CD8-positive, alpha-beta T cell (primary cell): ENCODE measurements at regions of chr17 and their contacts with region 1.

Region 1: DNA sequence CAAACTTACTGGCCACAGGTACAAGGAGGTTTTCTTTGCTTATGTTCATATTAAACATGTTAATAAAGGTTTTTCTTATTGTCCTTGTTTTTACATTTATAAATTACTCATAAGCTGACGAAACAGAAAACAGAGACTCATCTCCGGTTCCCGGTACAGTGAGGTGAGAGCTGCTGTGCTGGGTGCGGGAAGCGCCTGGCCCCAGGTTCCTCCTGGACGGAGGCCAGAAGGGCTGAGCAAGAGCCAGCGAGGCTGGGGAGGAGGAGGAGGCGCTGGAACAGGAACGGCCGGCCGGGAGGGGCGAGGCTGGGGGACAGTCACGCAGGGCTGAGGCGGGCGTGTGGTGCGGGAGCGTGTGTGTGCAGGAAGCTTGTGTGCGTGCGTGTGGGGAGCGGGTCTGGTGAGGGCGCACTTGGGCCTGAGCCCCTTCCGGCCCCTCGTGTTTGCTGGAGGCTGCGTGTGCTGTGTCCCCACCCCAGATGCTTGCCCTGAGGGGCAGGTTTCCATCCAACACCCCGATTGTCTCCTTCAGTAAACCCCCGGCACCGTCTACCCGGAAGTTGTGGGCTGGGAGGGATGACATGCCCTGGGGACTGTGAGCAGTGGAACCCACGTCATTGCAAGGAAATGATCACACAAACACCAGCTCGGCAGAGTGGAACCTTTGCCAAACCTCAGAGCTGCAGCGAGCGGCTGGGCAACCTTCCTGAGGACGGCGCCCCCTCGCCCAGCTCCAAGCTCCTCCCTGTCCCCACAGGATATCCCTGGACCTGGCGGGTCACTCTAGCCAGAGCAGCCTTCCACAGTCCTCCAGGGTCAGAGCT is 19.5 kb downstream of the CD7 start:
- DNase-seq: peak; percentile 84 to 99 (median 93)
- ATAC-seq: peak; percentile 72
- H3K4me3 ChIP-seq: peak overlapping the region; percentile 34 to 62
- H3K4me3 Mint-ChIP-seq: peak overlapping the region; percentile 93
- H3K27ac ChIP-seq: peak overlapping the region; percentile 90 to 98
- H3K27ac Mint-ChIP-seq: peak overlapping the region; percentile 100
- H3K4me1 ChIP-seq: peaks cover 66% of the 10 kb centered on the region
- H3K4me1 Mint-ChIP-seq: peaks cover 81% of the 10 kb centered on the region
- H3K27me3 ChIP-seq: no peaks in the 10 kb centered on the region
- H3K27me3 Mint-ChIP-seq: no peaks in the 10 kb centered on the region
- CTCF ChIP-seq: no peak

Region 2: GRCh38 chr17:82129095-82129494 is 168.8 kb before region 1 on chr17:
- CTCF ChIA-PET with region 1: no interaction called
- POLR2A ChIA-PET with region 1: no interaction called
- intact Hi-C with region 1: loop called (anchors 1 to 5 kb)
- DNase-seq: no peak
- ATAC-seq: no peak
- H3K4me3 ChIP-seq: no peak overlapping the region
- H3K4me3 Mint-ChIP-seq: no peak overlapping the region
- H3K27ac ChIP-seq: no peak overlapping the region
- H3K27ac Mint-ChIP-seq: peak overlapping the region; percentile 98
- H3K4me1 ChIP-seq: peaks cover 46% of the 10 kb centered on the region
- H3K4me1 Mint-ChIP-seq: peaks cover 47% of the 10 kb centered on the region
- H3K27me3 ChIP-seq: no peaks in the 10 kb centered on the region
- H3K27me3 Mint-ChIP-seq: no peaks in the 10 kb centered on the region
- CTCF ChIP-seq: no peak

Region 3: DNA sequence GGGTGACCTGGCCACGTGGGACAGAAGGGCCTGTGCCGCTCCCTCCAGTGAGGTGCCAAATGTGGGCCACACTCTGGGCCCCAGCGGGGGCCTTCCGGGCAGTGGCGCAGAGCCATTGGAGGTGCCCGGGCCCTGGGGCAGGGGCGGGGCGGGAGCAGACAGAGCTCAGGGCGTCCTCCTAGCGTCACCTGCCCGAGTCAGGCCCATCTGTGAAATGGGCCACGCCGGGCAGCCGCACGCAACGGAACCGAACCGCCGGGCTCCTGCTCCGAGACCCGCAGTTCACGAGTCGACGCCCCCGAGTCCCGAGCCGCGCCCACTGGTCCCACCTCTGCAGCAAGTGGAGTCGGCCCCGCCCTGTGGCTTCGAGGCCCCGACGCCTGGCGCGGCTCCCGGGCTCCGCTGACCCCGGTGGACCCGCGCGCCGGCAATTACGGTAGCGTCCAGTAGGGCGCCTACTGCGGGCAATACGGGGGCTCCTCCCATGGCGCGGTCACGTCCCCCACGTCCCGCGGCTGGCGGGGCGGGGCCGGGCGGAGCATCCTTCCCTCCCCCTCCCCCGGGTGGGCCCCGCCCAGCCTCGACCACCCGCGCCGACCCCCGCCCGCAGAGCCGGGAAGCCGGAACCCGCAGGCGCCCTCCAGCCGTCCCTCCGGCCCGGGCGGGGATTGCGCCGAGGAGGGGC is 67.2 kb before region 1 on chr17:
- CTCF ChIA-PET with region 1: interaction called, 66 read pairs
- POLR2A ChIA-PET with region 1: interaction called, 8 read pairs
- intact Hi-C with region 1: loop called in 1 of 2 experiments (anchors 2 kb)
- DNase-seq: peak in 6 of 9 experiments; percentile 54 to 79 (median 69)
- ATAC-seq: peak; percentile 32
- H3K4me3 ChIP-seq: peak overlapping the region; percentile 39 to 44
- H3K4me3 Mint-ChIP-seq: peak overlapping the region; percentile 82
- H3K27ac ChIP-seq: peak overlapping the region in 1 of 2 experiments; percentile 66
- H3K27ac Mint-ChIP-seq: no peak overlapping the region
- H3K4me1 ChIP-seq: peaks cover 42% of the 10 kb centered on the region
- H3K4me1 Mint-ChIP-seq: peaks cover 14% of the 10 kb centered on the region
- H3K27me3 ChIP-seq: no peaks in the 10 kb centered on the region
- H3K27me3 Mint-ChIP-seq: no peaks in the 10 kb centered on the region
- CTCF ChIP-seq: no peak

Region 4: DNA sequence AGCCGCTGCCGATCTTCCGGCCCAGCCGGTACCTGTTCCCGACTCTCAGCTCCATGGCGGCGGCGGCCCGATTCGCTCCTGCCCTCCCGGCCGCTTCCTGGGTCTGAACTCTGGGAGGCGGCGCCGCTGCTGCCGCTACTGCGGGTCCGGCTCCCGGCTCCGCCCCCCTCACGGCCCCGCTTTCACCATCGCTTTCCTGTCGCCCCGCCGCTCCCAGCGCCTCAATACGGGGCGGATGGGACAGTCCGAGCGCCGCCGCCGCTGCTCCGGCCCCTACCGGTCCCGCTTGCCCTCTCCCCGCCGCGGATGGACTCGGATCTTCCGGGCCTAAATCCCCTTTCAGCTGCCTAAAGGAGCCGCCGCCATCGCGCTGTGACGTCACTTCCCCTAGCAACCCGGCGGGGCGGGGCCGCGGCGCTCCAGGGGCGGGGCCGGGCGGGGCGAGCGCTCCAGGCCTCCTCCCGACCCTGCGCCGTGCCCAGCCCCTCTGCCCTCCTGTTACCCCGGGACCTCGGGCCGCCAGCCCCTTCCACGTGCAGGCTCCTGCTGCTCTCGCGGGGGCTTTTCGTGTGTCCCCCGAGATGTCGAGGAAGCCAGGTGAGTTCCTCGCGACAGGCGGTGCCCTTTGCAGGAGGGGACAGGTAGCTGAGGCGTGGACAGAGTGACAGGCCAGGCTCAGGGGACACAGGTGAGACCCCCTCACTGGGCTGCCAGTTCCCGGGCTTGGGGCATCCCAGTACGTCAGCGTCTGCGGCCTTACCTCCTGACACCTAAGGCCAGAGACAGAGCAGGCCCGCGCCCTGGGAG is 24.4 kb before region 1 on chr17 and contains the start of gene CSNK1D:
- CTCF ChIA-PET with region 1: interaction called, 8 read pairs
- POLR2A ChIA-PET with region 1: interaction called, 16 read pairs
- intact Hi-C with region 1: loop called (anchors 1 kb)
- DNase-seq: peak; percentile 86 to 97 (median 92)
- ATAC-seq: peak; percentile 77
- H3K4me3 ChIP-seq: peak within 1 kb of the TSS; percentile 71 to 87
- H3K4me3 Mint-ChIP-seq: peak within 1 kb of the TSS; percentile 95
- H3K27ac ChIP-seq: peak within 1 kb of the TSS; percentile 84 to 88
- H3K27ac Mint-ChIP-seq: peak within 1 kb of the TSS; percentile 99
- H3K4me1 ChIP-seq: peaks cover 47% of the 10 kb centered on the region
- H3K4me1 Mint-ChIP-seq: peaks cover 43% of the 10 kb centered on the region
- H3K27me3 ChIP-seq: no peaks in the 10 kb centered on the region
- H3K27me3 Mint-ChIP-seq: no peaks in the 10 kb centered on the region
- CTCF ChIP-seq: no peak
- total RNA-seq, gene CSNK1D: 369 to 393 TPM

Region 5: DNA sequence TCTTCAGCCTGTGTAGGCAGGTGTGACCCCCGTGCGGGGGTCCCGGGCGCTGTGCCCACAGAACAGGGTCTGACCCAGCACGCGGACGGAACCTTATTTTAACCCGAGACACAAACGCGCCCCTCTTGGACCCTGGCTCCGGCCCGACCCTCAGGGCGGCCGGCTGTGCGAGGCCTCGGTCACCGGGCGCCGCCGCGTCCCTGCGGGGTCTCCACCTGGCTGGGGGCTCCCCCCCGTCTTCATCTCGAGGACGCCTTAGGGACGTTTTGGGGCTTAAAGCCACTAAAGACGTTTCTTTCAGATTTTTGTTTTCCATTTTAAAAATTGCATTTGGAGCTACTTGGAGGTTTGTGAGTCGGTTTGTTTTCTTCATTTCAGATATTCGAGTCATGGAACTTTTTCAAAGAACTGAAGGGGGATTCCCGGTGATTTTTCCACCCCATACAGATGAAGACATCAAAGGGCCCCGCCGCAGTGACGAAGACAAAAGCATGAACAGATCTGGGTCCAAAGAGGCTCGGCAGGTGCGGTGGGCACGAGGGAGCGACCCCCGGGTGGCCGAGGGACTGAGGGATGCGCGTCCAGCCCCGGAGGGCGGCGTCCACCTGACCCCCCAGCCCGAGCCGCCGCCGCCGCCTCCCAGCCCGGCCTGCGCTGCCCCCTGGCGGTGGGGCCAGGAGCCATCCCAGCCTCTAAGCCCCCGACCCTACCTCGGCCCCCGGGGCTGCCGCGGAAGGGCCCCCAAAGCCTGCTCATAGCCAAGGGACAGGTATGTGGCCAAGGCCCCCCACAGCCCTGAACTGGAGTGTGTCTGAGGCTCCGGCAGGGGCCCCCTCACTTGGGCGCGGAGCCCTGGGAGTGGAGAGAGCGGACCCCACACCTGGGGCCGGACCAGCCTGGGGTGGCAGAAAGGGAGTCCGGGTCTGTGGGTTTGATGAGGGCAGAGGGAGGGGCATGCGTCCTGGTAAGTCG is 23.3 kb after region 1 on chr17:
- CTCF ChIA-PET with region 1: interaction called, 150 read pairs
- POLR2A ChIA-PET with region 1: interaction called, 80 read pairs
- intact Hi-C with region 1: loop called (anchors 1 kb)
- DNase-seq: peak; percentile 46 to 94 (median 84)
- ATAC-seq: peak; percentile 44
- H3K4me3 ChIP-seq: peak overlapping the region; percentile 25 to 56
- H3K4me3 Mint-ChIP-seq: peak overlapping the region; percentile 74
- H3K27ac ChIP-seq: peak overlapping the region in 1 of 2 experiments; percentile 36
- H3K27ac Mint-ChIP-seq: peak overlapping the region; percentile 92
- H3K4me1 ChIP-seq: peaks cover 24% of the 10 kb centered on the region
- H3K4me1 Mint-ChIP-seq: peaks cover 19% of the 10 kb centered on the region
- H3K27me3 ChIP-seq: peaks cover 0 to 5% of the 10 kb centered on the region in 2 experiments
- H3K27me3 Mint-ChIP-seq: no peaks in the 10 kb centered on the region
- CTCF ChIP-seq: peak; percentile 97

Region 6: GRCh38 chr17:82457997-82458864 is 160.3 kb after region 1 on chr17 and contains the start of gene NARF:
- CTCF ChIA-PET with region 1: no interaction called
- POLR2A ChIA-PET with region 1: interaction called, 3 read pairs
- intact Hi-C with region 1: loop called (anchors 2 to 5 kb)
- DNase-seq: peak; percentile 89 to 98 (median 95)
- ATAC-seq: peak; percentile 97
- H3K4me3 ChIP-seq: peak within 1 kb of the TSS; percentile 67 to 76
- H3K4me3 Mint-ChIP-seq: peak within 1 kb of the TSS; percentile 87
- H3K27ac ChIP-seq: peak within 1 kb of the TSS; percentile 96 to 97
- H3K27ac Mint-ChIP-seq: peak within 1 kb of the TSS; percentile 97
- H3K4me1 ChIP-seq: peaks cover 17% of the 10 kb centered on the region
- H3K4me1 Mint-ChIP-seq: peaks cover 29% of the 10 kb centered on the region
- H3K27me3 ChIP-seq: no peaks in the 10 kb centered on the region
- H3K27me3 Mint-ChIP-seq: no peaks in the 10 kb centered on the region
- CTCF ChIP-seq: no peak
- total RNA-seq, gene NARF: 60.0 to 60.1 TPM

Region 7: DNA sequence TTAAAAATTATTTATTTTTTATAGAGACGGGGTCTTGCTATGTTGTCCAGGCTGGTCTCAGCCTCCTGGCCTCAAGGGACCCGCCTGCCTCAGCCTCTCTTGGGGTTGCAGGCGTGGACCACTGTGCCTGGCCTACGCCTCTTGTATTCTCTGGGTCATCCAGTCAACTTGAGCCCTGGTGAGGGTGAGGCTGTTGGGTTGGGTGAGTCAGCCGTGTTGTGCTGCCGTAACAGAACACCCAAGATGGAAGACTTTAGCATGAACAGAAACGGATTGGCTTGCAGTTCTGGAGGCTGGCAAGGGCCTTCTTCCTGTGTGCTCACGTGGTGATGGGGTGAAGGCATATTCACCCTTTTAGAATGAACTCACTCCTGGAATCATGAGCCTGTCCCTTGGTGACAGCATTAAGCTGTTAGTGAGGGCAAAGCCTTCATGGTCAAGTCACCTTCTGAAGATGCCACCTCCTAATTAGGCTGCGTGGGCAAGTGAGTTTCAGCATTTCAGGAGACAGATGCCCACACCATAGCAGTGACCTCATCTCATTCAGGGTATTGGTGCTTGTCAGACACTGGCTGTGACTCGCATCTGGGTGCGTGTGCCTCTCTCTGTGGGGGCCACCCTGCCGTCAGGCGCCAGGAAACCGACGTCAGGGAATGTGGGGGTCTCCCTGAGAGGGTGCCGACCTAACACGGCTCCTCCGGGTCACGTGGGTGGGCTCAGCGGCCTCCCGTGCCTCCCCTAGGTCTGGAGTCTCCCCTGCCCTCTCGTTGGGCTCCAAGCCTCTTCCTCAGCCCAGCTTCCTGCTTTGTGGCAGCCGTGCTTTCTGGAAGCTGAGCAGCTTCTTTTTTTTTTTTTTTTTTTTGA is 300.6 kb after region 1 on chr17:
- CTCF ChIA-PET with region 1: no interaction called
- POLR2A ChIA-PET with region 1: no interaction called
- intact Hi-C with region 1: no loop called
- DNase-seq: no peak
- ATAC-seq: no peak
- H3K4me3 ChIP-seq: no peak overlapping the region
- H3K4me3 Mint-ChIP-seq: no peak overlapping the region
- H3K27ac ChIP-seq: no peak overlapping the region
- H3K27ac Mint-ChIP-seq: no peak overlapping the region
- H3K4me1 ChIP-seq: peaks cover 22% of the 10 kb centered on the region
- H3K4me1 Mint-ChIP-seq: peaks cover 20% of the 10 kb centered on the region
- H3K27me3 ChIP-seq: no peaks in the 10 kb centered on the region
- H3K27me3 Mint-ChIP-seq: no peaks in the 10 kb centered on the region
- CTCF ChIP-seq: no peak